Activated CD4-positive, alpha-beta memory T cell treated with anti-CD3 and anti-CD28 coated beads for 36 hours (primary cell): ENCODE measurements at regions of chr15 and their contacts with region 1.

Region 1: DNA sequence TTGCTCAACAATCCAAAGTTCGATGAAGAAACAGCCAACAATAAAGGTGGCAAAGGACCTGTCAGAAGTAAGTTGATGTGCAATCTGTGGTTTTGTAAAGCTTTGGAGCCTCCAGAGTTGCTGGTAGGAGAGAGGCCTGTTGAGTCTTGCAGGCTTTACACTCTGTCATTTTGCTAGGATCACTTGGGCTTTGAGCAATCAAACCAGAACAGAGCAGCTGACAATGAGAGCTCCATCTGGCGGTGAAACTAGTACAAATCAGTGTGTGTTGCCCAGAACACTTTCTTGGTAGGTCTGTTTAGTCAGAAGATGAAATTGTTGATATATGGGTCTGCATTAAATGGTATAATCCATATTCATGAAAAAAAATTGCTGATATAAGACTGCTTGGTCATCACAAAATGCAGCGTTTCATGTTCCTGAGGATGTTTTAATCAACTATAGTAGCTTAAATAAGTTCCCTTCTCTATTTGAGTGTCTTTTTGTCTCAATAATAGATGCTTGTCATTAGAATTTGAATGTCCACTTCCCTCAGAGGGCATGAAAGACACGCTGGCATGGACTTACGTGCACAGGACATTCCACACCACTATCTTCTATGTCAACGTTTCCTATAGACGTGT is 25.7 kb downstream of the TMOD2 start:
- DNase-seq: peak; percentile 67
- H3K4me3 Mint-ChIP-seq: no peak overlapping the region
- H3K27ac Mint-ChIP-seq: no peak overlapping the region
- H3K4me1 Mint-ChIP-seq: peaks cover 7% of the 10 kb centered on the region
- H3K27me3 Mint-ChIP-seq: no peaks in the 10 kb centered on the region

Region 2: DNA sequence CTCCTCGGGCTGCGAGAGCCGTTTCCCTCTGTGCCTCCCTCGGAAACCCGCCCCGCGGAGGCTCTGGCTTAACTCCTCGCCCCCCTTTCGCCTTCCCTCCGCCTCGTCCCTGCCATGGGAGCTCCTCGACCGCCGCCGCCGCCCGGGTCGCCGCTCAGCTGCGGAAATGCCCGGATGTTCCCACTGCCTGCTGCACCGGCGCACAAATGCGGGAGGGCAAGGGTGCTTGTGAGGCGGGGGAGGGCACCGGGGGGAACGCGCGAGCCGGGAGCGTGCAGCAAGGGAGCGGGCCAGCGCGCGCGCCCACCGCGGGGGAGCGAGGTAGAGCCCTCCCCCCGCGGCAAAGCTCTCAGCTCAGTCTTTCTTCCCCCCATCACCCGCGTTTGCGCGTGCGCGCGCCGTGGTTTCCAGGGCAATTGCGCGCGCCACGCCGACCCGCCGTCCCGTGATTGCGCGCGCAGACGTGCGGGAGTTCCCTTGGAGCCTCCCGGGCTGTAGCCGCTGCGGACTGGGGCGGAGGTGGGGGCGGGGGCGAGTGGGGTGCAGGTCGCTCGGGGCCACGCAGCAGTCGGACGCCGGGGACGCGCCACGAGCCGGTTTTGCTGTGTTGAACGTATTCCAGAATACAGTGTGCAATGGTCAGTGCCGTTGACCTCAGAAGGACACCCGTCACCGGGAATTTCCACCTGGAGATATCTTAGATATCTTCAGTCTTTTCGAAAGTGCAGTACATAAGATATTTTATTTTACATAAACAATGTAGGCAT is 154.3 kb before region 1 on chr15 and contains the start of gene DMXL2:
- CTCF ChIA-PET with region 1: interaction called, 34 read pairs
- POLR2A ChIA-PET with region 1: no interaction called
- intact Hi-C with region 1: no loop called
- DNase-seq: peak; percentile 77
- H3K4me3 Mint-ChIP-seq: peak within 1 kb of the TSS; percentile 83
- H3K27ac Mint-ChIP-seq: no peak within 1 kb of the TSS
- H3K4me1 Mint-ChIP-seq: peaks cover 14% of the 10 kb centered on the region
- H3K27me3 Mint-ChIP-seq: peaks cover 16% of the 10 kb centered on the region
- total RNA-seq, gene DMXL2: 6.1 to 6.3 TPM

Region 3: GRCh38 chr15:51649659-51650521 is 127.2 kb before region 1 on chr15:
- CTCF ChIA-PET with region 1: interaction called, 406 read pairs
- POLR2A ChIA-PET with region 1: interaction called, 4 read pairs
- intact Hi-C with region 1: loop called (anchors 1 kb)
- DNase-seq: peak; percentile 10
- H3K4me3 Mint-ChIP-seq: no peak overlapping the region
- H3K27ac Mint-ChIP-seq: no peak overlapping the region
- H3K4me1 Mint-ChIP-seq: no peaks in the 10 kb centered on the region
- H3K27me3 Mint-ChIP-seq: no peaks in the 10 kb centered on the region

Region 4: DNA sequence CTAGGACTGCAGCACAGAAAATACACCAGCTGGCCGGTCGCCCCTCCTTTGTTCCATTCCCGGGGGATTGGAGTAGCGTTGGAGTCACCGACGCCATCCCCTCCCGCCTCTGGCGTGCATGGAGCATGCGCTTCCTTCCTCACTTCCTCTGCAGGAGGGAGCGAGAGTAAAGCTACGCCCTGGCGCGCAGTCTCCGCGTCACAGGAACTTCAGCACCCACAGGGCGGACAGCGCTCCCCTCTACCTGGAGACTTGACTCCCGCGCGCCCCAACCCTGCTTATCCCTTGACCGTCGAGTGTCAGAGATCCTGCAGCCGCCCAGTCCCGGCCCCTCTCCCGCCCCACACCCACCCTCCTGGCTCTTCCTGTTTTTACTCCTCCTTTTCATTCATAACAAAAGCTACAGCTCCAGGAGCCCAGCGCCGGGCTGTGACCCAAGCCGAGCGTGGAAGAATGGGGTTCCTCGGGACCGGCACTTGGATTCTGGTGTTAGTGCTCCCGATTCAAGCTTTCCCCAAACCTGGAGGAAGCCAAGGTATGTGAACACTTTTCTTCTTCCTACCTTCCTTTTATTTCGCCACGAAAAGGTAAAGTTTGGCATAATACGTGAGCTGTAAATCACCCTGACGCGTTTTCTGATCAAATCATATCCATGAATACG is 95.6 kb before region 1 on chr15 and contains the start of gene SCG3:
- CTCF ChIA-PET with region 1: interaction called, 18 read pairs
- POLR2A ChIA-PET with region 1: no interaction called
- intact Hi-C with region 1: no loop called
- DNase-seq: peak; percentile 78
- H3K4me3 Mint-ChIP-seq: no peak within 1 kb of the TSS
- H3K27ac Mint-ChIP-seq: no peak within 1 kb of the TSS
- H3K4me1 Mint-ChIP-seq: peaks cover 5% of the 10 kb centered on the region
- H3K27me3 Mint-ChIP-seq: peaks cover 32% of the 10 kb centered on the region
- total RNA-seq, gene SCG3: not detected

Region 5: GRCh38 chr15:51731549-51732267 is 45.4 kb before region 1 on chr15:
- CTCF ChIA-PET with region 1: interaction called, 44 read pairs
- POLR2A ChIA-PET with region 1: interaction called, 3 read pairs
- intact Hi-C with region 1: loop called (anchors 2 kb)
- DNase-seq: peak; percentile 45
- H3K4me3 Mint-ChIP-seq: peak overlapping the region; percentile 66
- H3K27ac Mint-ChIP-seq: peak overlapping the region; percentile 77
- H3K4me1 Mint-ChIP-seq: peaks cover 79% of the 10 kb centered on the region
- H3K27me3 Mint-ChIP-seq: no peaks in the 10 kb centered on the region

Region 6: GRCh38 chr15:51750792-51751685 is 26.0 kb before region 1 on chr15 and contains the start of gene TMOD2:
- CTCF ChIA-PET with region 1: interaction called, 36 read pairs
- POLR2A ChIA-PET with region 1: no interaction called
- intact Hi-C with region 1: no loop called
- DNase-seq: peak; percentile 61
- H3K4me3 Mint-ChIP-seq: peak within 1 kb of the TSS; percentile 84
- H3K27ac Mint-ChIP-seq: no peak within 1 kb of the TSS
- H3K4me1 Mint-ChIP-seq: peaks cover 16% of the 10 kb centered on the region
- H3K27me3 Mint-ChIP-seq: peaks cover 1% of the 10 kb centered on the region
- total RNA-seq, gene TMOD2: 6.7 to 7.9 TPM

Region 7: DNA sequence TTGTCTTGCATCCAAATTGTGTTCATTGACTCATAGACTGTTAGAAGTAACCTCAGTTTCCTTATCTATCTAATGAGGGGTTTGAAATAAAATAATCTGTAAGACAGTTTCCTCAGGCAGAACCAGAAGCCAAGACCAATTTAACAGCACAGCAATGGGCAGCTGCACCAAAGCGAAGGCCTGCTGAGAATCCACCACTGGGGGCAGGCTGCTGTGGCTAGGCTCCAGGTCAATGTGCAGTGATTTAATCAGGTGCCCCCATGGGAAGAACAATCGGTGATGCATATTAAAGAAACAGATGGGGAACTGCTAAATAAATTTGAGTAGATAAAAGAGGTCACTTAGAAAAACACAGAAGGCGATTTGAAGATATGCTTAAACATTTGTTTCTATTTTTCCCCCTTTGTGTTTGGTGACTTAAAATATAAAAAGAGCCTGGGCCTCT is 24.4 kb after region 1 on chr15:
- CTCF ChIA-PET with region 1: interaction called, 12 read pairs
- POLR2A ChIA-PET with region 1: no interaction called
- intact Hi-C with region 1: no loop called
- DNase-seq: no peak
- H3K4me3 Mint-ChIP-seq: no peak overlapping the region
- H3K27ac Mint-ChIP-seq: no peak overlapping the region
- H3K4me1 Mint-ChIP-seq: no peaks in the 10 kb centered on the region
- H3K27me3 Mint-ChIP-seq: no peaks in the 10 kb centered on the region